Activated CD4-positive, alpha-beta memory T cell treated with anti-CD3 and anti-CD28 coated beads for 36 hours (primary cell): ENCODE measurements at regions of chr18 and their contacts with region 1.

Region 1: GRCh38 chr18:830315-830901 is 18.4 kb upstream of the YES1 start:
- DNase-seq: peak; percentile 24
- H3K4me3 Mint-ChIP-seq: peak overlapping the region; percentile 2
- H3K27ac Mint-ChIP-seq: peak overlapping the region; percentile 44
- H3K4me1 Mint-ChIP-seq: peaks cover 19% of the 10 kb centered on the region
- H3K27me3 Mint-ChIP-seq: no peaks in the 10 kb centered on the region

Region 2: GRCh38 chr18:623761-624620 is 206.4 kb before region 1 on chr18:
- CTCF ChIA-PET with region 1: interaction called, 127 read pairs
- POLR2A ChIA-PET with region 1: no interaction called
- intact Hi-C with region 1: loop called (anchors 1 kb)
- DNase-seq: peak; percentile 69
- H3K4me3 Mint-ChIP-seq: no peak overlapping the region
- H3K27ac Mint-ChIP-seq: no peak overlapping the region
- H3K4me1 Mint-ChIP-seq: no peaks in the 10 kb centered on the region
- H3K27me3 Mint-ChIP-seq: peaks cover 10% of the 10 kb centered on the region

Region 3: GRCh38 chr18:731185-731584 is 99.2 kb before region 1 on chr18:
- CTCF ChIA-PET with region 1: interaction called, 10 read pairs
- POLR2A ChIA-PET with region 1: no interaction called
- intact Hi-C with region 1: no loop called
- DNase-seq: no peak
- H3K4me3 Mint-ChIP-seq: no peak overlapping the region
- H3K27ac Mint-ChIP-seq: no peak overlapping the region
- H3K4me1 Mint-ChIP-seq: peaks cover 6% of the 10 kb centered on the region
- H3K27me3 Mint-ChIP-seq: no peaks in the 10 kb centered on the region

Region 4: GRCh38 chr18:741931-742512 is 88.4 kb before region 1 on chr18:
- CTCF ChIA-PET with region 1: interaction called, 171 read pairs
- POLR2A ChIA-PET with region 1: no interaction called
- intact Hi-C with region 1: loop called (anchors 1 kb)
- DNase-seq: no peak
- H3K4me3 Mint-ChIP-seq: no peak overlapping the region
- H3K27ac Mint-ChIP-seq: no peak overlapping the region
- H3K4me1 Mint-ChIP-seq: no peaks in the 10 kb centered on the region
- H3K27me3 Mint-ChIP-seq: no peaks in the 10 kb centered on the region

Region 5: GRCh38 chr18:801137-801536 is 29.3 kb before region 1 on chr18:
- CTCF ChIA-PET with region 1: interaction called, 12 read pairs
- POLR2A ChIA-PET with region 1: no interaction called
- intact Hi-C with region 1: no loop called
- DNase-seq: no peak
- H3K4me3 Mint-ChIP-seq: no peak overlapping the region
- H3K27ac Mint-ChIP-seq: no peak overlapping the region
- H3K4me1 Mint-ChIP-seq: peaks cover 33% of the 10 kb centered on the region
- H3K27me3 Mint-ChIP-seq: no peaks in the 10 kb centered on the region

Region 6: GRCh38 chr18:985212-985661 is 154.8 kb after region 1 on chr18:
- CTCF ChIA-PET with region 1: no interaction called
- POLR2A ChIA-PET with region 1: no interaction called
- intact Hi-C with region 1: no loop called
- DNase-seq: no peak
- H3K4me3 Mint-ChIP-seq: no peak overlapping the region
- H3K27ac Mint-ChIP-seq: no peak overlapping the region
- H3K4me1 Mint-ChIP-seq: no peaks in the 10 kb centered on the region
- H3K27me3 Mint-ChIP-seq: no peaks in the 10 kb centered on the region